ENCODE measurements at regions of chr6 and their contacts with region 1.

Region 1: GRCh38 chr6:42038811-42039408 is 11.4 kb upstream of the TAF8 start:
- DNase-seq: no peak
- ATAC-seq: no peak
- H3K4me3 ChIP-seq: peak overlapping the region; percentile 61
- H3K4me3 Mint-ChIP-seq: peak overlapping the region; percentile 84 to 99 (median 95)
- H3K27ac ChIP-seq: peak overlapping the region; percentile 76
- H3K27ac Mint-ChIP-seq: peak overlapping the region; percentile 63 to 98 (median 94)
- H3K4me1 ChIP-seq: peaks cover 75 to 81% of the 10 kb centered on the region in 2 donors
- H3K4me1 Mint-ChIP-seq: peaks cover 43 to 85% (median 71%) of the 10 kb centered on the region in 7 donors
- H3K27me3 ChIP-seq: no peaks in the 10 kb centered on the region
- H3K27me3 Mint-ChIP-seq: no peaks in the 10 kb centered on the region

Region 2: DNA sequence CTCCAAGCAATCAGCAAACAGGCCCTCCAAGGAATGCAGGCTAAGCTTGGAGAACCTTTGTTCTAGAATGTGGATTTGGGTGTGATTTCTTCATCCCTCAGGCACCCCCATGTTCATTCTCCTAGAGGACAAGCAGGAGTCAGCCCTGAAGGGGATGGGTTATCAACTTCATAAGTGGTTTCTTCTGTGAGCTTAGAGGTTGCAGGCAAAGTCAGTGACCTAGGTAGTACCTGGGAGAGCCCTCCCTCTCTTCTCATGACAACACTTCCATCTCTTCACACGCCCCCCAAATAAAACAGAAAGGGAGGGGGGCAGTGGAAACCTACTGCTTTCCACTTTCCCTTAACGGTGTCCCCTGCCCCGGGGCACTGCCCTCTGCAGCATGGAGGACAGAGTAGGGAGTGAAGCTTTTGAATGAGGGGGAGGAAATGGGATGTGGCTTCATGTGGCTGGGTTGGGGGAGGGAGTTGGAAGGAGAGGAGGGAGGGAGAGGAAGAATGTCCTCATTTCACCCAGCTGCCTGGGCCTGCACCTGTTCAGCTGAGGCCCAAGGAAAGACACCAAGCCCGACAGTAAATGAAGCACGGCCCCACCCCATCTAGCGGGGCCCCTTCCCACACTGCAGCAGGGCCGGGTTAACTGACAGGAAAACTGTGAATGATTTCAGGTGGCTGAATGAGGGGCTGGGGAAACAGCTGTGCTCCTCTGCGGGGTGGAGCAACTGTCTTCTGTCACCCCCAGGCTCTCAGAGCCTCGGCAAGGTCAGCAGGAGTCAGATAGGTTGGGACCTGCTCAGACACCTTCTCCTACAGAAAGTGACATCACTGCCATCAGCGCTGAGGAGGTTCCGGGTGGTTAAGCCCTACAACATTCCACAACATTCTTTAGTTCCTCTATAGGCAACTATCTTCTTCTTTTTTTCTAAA is 28.7 kb before region 1 on chr6:
- CTCF ChIA-PET with region 1: interaction called, 8 read pairs
- POLR2A ChIA-PET with region 1: interaction called, 10 read pairs
- intact Hi-C with region 1: loop called (anchors 1 to 5 kb)
- DNase-seq: peak in 3 of 9 donors; percentile 21 to 35 (median 30)
- ATAC-seq: peak; percentile 53
- H3K4me3 ChIP-seq: no peak overlapping the region
- H3K4me3 Mint-ChIP-seq: peak overlapping the region; percentile 54 to 84 (median 72)
- H3K27ac ChIP-seq: peak overlapping the region; percentile 65
- H3K27ac Mint-ChIP-seq: peak overlapping the region; percentile 73 to 93 (median 88)
- H3K4me1 ChIP-seq: peaks cover 37 to 56% of the 10 kb centered on the region in 2 donors
- H3K4me1 Mint-ChIP-seq: peaks cover 71 to 90% (median 83%) of the 10 kb centered on the region in 7 donors
- H3K27me3 ChIP-seq: no peaks in the 10 kb centered on the region
- H3K27me3 Mint-ChIP-seq: no peaks in the 10 kb centered on the region

Region 3: DNA sequence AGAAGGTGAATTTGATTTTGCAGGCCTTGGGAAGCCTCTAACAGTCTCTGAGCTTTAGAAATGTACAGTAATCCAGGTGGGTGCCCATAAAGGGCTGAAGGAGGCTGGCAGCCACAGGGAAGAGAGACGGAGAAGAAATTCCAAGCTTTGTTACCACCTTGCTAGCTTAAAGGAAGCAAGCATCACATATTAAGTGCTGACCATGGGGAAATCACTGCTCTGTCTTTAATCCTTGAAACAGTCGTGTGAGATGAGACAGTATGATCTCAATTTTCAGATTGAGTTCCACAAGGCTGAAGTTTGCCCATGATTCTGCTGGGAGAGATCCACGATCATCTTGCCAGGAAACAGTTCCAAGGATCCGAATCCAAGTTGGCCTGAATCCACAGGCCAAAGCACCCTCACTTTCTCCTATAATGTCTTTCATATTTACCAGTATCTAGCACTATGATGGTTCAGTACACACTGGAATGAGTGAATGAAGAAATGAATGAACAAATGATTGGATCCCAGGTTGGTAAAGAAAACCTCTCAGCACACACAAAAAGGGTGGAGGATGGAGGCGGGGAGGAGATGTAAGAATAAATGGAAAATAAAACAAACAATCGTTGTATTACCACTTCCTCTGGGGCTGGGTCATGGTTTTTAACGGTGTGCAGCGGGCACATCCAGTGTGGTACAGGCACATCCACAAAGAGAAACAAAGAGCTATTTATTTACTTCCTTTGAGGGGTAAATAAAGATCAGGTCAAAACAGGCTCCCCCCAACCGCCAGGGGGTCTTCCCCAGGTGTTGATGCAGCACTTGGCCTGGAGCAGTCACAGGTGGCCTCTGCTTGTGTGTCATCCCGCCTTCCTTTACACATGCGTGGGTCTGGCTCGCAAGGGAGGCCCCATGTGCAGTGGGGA is 16.8 kb before region 1 on chr6:
- CTCF ChIA-PET with region 1: interaction called, 25 read pairs
- POLR2A ChIA-PET with region 1: interaction called, 14 read pairs
- intact Hi-C with region 1: loop called (anchors 1 kb)
- DNase-seq: peak in 8 of 9 donors; percentile 64 to 86 (median 77)
- ATAC-seq: peak; percentile 85
- H3K4me3 ChIP-seq: peak overlapping the region; percentile 23
- H3K4me3 Mint-ChIP-seq: peak overlapping the region; percentile 73 to 91 (median 80)
- H3K27ac ChIP-seq: peak overlapping the region; percentile 62
- H3K27ac Mint-ChIP-seq: peak overlapping the region; percentile 87 to 98 (median 95)
- H3K4me1 ChIP-seq: peaks cover 69 to 72% of the 10 kb centered on the region in 2 donors
- H3K4me1 Mint-ChIP-seq: peaks cover 59 to 94% (median 78%) of the 10 kb centered on the region in 7 donors
- H3K27me3 ChIP-seq: no peaks in the 10 kb centered on the region
- H3K27me3 Mint-ChIP-seq: no peaks in the 10 kb centered on the region

Region 4: GRCh38 chr6:42028234-42029061 is 10.5 kb before region 1 on chr6:
- CTCF ChIA-PET with region 1: interaction called, 8 read pairs
- POLR2A ChIA-PET with region 1: interaction called, 35 read pairs
- intact Hi-C with region 1: no loop called
- DNase-seq: peak in 1 of 9 donors; percentile 7
- ATAC-seq: peak; percentile 65
- H3K4me3 ChIP-seq: no peak overlapping the region
- H3K4me3 Mint-ChIP-seq: peak overlapping the region; percentile 69 to 88 (median 78)
- H3K27ac ChIP-seq: peak overlapping the region; percentile 56
- H3K27ac Mint-ChIP-seq: peak overlapping the region; percentile 89 to 98 (median 95)
- H3K4me1 ChIP-seq: peaks cover 84 to 91% of the 10 kb centered on the region in 2 donors
- H3K4me1 Mint-ChIP-seq: peaks cover 76 to 100% (median 87%) of the 10 kb centered on the region in 7 donors
- H3K27me3 ChIP-seq: no peaks in the 10 kb centered on the region
- H3K27me3 Mint-ChIP-seq: no peaks in the 10 kb centered on the region

Region 5: GRCh38 chr6:42050266-42051032 is 11.5 kb after region 1 on chr6 and contains the start of gene TAF8:
- CTCF ChIA-PET with region 1: interaction called, 8 read pairs
- POLR2A ChIA-PET with region 1: interaction called, 24 read pairs
- intact Hi-C with region 1: loop called (anchors 1 kb)
- DNase-seq: peak; percentile 76 to 89 (median 87)
- ATAC-seq: peak; percentile 80
- H3K4me3 ChIP-seq: peak within 1 kb of the TSS; percentile 98
- H3K4me3 Mint-ChIP-seq: peak within 1 kb of the TSS; percentile 89 to 99 (median 99)
- H3K27ac ChIP-seq: peak within 1 kb of the TSS; percentile 78
- H3K27ac Mint-ChIP-seq: peak within 1 kb of the TSS; percentile 93 to 98 (median 97)
- H3K4me1 ChIP-seq: peaks cover 24 to 27% of the 10 kb centered on the region in 2 donors
- H3K4me1 Mint-ChIP-seq: peaks cover 36 to 70% (median 51%) of the 10 kb centered on the region in 7 donors
- H3K27me3 ChIP-seq: no peaks in the 10 kb centered on the region
- H3K27me3 Mint-ChIP-seq: no peaks in the 10 kb centered on the region
- total RNA-seq, gene TAF8: 41.6 to 58.2 (median 50.8) TPM

Measured in naive thymus-derived CD4-positive, alpha-beta T cell (primary cell).